ENCODE measurements at regions of chr19 and their contacts with region 1.

Region 1: GRCh38 chr19:33214596-33214995 is 11.1 kb downstream of the SLC7A10 start:
- DNase-seq: peak; percentile 65
- ATAC-seq: peak; percentile 76
- H3K4me3 Mint-ChIP-seq: no peak overlapping the region
- H3K27ac Mint-ChIP-seq: no peak overlapping the region; the same call in 1 of the 2 replicates
- H3K4me1 Mint-ChIP-seq: 0 out of 2 replicates have a peak, but pooled peaks cover 6% of the 10 kb centered on the region
- H3K27me3 Mint-ChIP-seq: no peaks in the 10 kb centered on the region
- CTCF ChIP-seq: no peak

Region 2: DNA sequence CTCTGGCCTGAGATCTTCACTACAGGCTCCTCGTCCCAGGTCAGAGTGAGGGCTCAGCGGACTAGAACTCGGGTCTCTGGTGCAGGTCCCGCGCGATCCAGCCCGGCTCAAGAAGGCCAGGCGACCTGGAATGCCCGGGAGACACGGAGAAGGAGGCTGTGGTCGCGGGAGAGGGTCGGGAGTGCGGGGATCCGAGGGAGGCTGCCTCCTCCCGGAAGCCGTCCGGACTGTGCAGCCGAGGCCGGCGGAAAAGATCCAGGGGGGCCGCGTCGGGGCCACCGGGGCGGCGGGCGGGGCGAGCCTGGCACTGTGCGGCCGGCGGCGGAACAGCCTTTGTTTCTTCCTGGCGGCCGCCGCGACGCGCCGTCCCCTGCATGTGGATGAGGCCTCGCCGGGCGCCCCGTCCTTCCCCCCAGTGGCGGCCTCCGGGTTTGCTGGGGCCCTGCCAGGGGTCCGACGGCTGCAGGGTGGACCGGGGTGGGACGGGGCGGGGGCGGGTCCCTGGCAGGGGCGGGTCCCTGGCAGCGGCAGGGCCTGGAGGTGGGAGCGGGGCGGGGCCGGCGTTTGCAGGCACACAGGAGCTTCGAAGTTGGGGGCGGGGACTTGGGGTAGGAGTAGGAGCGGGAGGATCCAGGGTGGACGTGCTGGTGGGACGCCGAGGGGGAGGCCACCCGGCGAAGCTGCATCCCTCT is 12.1 kb after region 1 on chr19:
- CTCF ChIA-PET with region 1: interaction called, 27 read pairs
- POLR2A ChIA-PET with region 1: interaction called, 3 read pairs
- DNase-seq: peak; percentile 78
- ATAC-seq: peak; percentile 81
- H3K4me3 Mint-ChIP-seq: peak overlapping the region; percentile 79
- H3K27ac Mint-ChIP-seq: no peak overlapping the region
- H3K4me1 Mint-ChIP-seq: peaks cover 13% of the 10 kb centered on the region
- H3K27me3 Mint-ChIP-seq: peaks cover 61% of the 10 kb centered on the region
- CTCF ChIP-seq: no peak